PC-9 (cell line): ENCODE measurements at regions of chr12 and their contacts with region 1.

Region 1: GRCh38 chr12:7995266-7995963 is 37.1 kb upstream of the FOXJ2 start:
- DNase-seq: peak; percentile 83 to 87
- H3K4me3 ChIP-seq: peak overlapping the region; percentile 18; the same call in 1 of the 2 replicates
- H3K27ac ChIP-seq: peak overlapping the region; percentile 72
- H3K4me1 ChIP-seq: peaks cover 34% of the 10 kb centered on the region
- H3K27me3 ChIP-seq: no peaks in the 10 kb centered on the region
- CTCF ChIP-seq: peak; percentile 94

Region 2: DNA sequence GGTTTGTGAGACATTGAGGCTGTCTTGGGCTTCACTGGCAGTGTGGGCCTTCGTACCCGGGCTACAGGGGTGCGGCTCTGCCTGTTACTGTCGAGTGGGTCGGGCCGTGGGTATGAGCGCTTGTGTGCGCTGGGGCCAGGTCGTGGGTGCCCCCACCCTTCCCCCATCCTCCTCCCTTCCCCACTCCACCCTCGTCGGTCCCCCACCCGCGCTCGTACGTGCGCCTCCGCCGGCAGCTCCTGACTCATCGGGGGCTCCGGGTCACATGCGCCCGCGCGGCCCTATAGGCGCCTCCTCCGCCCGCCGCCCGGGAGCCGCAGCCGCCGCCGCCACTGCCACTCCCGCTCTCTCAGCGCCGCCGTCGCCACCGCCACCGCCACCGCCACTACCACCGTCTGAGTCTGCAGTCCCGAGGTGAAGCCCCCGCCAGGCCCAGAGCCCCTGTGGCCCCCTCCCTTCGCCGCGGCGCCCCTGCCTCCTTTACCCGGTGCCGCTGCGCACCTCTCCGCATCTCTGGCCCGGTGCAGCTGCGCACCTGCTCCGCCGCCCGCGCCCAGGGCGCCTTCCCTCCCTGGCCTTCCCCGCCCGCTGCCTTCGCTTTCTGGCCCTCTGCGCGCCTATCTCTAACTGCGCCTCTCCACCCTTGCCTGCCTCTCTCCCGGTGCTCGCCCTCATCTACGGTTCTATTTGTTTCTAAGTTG is 1081.0 kb before region 1 on chr12 and contains the start of gene ENO2:
- CTCF ChIA-PET with region 1: no interaction called
- POLR2A ChIA-PET with region 1: no interaction called
- intact Hi-C with region 1: no loop called
- DNase-seq: peak in 1 of 2 experiments; percentile 75
- H3K4me3 ChIP-seq: peak within 1 kb of the TSS; percentile 77
- H3K27ac ChIP-seq: no peak within 1 kb of the TSS
- H3K4me1 ChIP-seq: peaks cover 5% of the 10 kb centered on the region; the same call in 1 of the 2 replicates
- H3K27me3 ChIP-seq: peaks cover 11% of the 10 kb centered on the region
- CTCF ChIP-seq: no peak
- total RNA-seq, gene ENO2: 38.8 and 56.6 TPM in 2 replicates

Region 3: GRCh38 chr12:7678738-7679137 is 316.7 kb before region 1 on chr12:
- CTCF ChIA-PET with region 1: interaction called, 3 read pairs
- POLR2A ChIA-PET with region 1: no interaction called
- intact Hi-C with region 1: loop called (anchors 5 kb)
- DNase-seq: no peak
- H3K4me3 ChIP-seq: no peak overlapping the region
- H3K27ac ChIP-seq: no peak overlapping the region
- H3K4me1 ChIP-seq: no peaks in the 10 kb centered on the region
- H3K27me3 ChIP-seq: no peaks in the 10 kb centered on the region
- CTCF ChIP-seq: no peak

Region 4: GRCh38 chr12:7832059-7832696 is 163.2 kb before region 1 on chr12:
- CTCF ChIA-PET with region 1: no interaction called
- POLR2A ChIA-PET with region 1: no interaction called
- intact Hi-C with region 1: loop called (anchors 1 kb)
- DNase-seq: peak; percentile 48 to 56
- H3K4me3 ChIP-seq: no peak overlapping the region
- H3K27ac ChIP-seq: no peak overlapping the region
- H3K4me1 ChIP-seq: peaks cover 17% of the 10 kb centered on the region
- H3K27me3 ChIP-seq: no peaks in the 10 kb centered on the region
- CTCF ChIP-seq: peak; percentile 78

Region 5: DNA sequence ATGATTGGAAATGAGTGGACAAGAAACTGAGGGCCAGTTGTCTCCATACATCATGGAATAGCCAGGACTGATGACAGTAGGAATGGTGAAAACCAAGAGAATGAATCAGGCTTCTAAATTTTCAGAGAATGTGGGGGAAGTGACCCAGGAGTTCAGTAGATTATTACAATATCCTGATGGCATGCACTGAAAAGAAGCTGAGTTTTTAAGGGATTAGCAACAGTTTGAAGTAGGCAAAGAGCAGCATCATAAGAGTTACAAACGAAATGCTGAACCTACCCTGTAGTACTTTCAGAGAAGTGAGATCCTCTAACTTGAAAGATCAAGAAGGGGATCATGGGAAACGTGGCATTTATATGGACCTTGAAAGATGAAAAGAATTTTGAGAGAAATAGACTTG is 135.9 kb before region 1 on chr12:
- CTCF ChIA-PET with region 1: interaction called, 4 read pairs
- POLR2A ChIA-PET with region 1: no interaction called
- intact Hi-C with region 1: loop called (anchors 1 kb)
- DNase-seq: no peak
- H3K4me3 ChIP-seq: no peak overlapping the region
- H3K27ac ChIP-seq: no peak overlapping the region
- H3K4me1 ChIP-seq: peaks cover 14% of the 10 kb centered on the region
- H3K27me3 ChIP-seq: no peaks in the 10 kb centered on the region
- CTCF ChIP-seq: no peak

Region 6: GRCh38 chr12:7933255-7933729 is 62.1 kb before region 1 on chr12:
- CTCF ChIA-PET with region 1: interaction called, 19 read pairs
- POLR2A ChIA-PET with region 1: interaction called, 7 read pairs
- intact Hi-C with region 1: loop called (anchors 1 kb)
- DNase-seq: peak; percentile 79 to 90
- H3K4me3 ChIP-seq: peak overlapping the region; percentile 59
- H3K27ac ChIP-seq: peak overlapping the region; percentile 33; the same call in 1 of the 2 replicates
- H3K4me1 ChIP-seq: peaks cover 44% of the 10 kb centered on the region
- H3K27me3 ChIP-seq: no peaks in the 10 kb centered on the region
- CTCF ChIP-seq: peak; percentile 85

Region 7: GRCh38 chr12:7959701-7960121 is 35.7 kb before region 1 on chr12:
- CTCF ChIA-PET with region 1: interaction called, 3 read pairs
- POLR2A ChIA-PET with region 1: interaction called, 7 read pairs
- intact Hi-C with region 1: loop called (anchors 1 kb)
- DNase-seq: peak; percentile 81 to 96
- H3K4me3 ChIP-seq: peak overlapping the region; percentile 63; the same call in 1 of the 2 replicates
- H3K27ac ChIP-seq: peak overlapping the region; percentile 75
- H3K4me1 ChIP-seq: peaks cover 35% of the 10 kb centered on the region
- H3K27me3 ChIP-seq: no peaks in the 10 kb centered on the region
- CTCF ChIP-seq: no peak

Region 8: DNA sequence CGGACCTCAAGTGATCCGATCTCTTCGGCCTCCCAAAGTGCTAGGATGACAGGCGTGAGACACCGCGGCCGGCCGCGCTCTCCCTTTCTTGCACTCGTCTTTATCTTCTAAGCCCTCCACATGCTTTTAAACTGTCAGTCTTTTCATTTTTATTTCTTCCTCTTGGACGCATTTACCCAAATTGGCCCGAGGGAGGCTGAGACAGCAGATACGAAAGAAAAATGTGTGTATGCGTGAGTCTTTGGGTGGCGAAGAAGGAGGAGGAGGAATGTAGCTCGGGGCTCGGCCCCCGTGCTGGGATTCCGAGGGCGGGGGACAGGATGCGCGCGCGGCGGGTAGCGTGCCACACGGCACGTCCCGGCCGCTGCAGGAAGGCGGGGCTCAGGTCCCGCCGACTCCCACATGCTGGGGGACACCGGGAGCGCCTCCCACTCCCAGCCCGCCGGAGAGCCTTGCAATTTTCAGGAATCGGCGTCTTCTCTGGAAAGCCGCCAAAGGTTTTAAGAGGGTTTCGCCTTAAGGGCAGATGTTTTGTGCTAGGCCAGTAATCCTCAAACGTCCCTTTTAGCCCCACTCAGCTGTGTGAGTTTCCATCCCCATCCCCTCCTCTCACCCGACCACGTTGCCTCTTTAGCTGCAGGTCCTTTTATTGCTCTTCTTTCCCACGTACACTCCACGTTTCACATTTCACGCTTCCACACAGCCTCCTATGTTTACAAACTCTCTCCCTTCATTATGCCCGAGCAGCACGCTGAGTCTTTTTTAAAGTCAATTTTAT is 24.8 kb before region 1 on chr12:
- CTCF ChIA-PET with region 1: interaction called, 4 read pairs
- POLR2A ChIA-PET with region 1: interaction called, 8 read pairs
- intact Hi-C with region 1: loop called (anchors 2 kb)
- DNase-seq: peak; percentile 90 to 98
- H3K4me3 ChIP-seq: peak overlapping the region; percentile 58
- H3K27ac ChIP-seq: peak overlapping the region; percentile 65
- H3K4me1 ChIP-seq: peaks cover 18% of the 10 kb centered on the region
- H3K27me3 ChIP-seq: no peaks in the 10 kb centered on the region
- CTCF ChIP-seq: no peak

Region 9: GRCh38 chr12:7981446-7981845 is 14.0 kb before region 1 on chr12:
- CTCF ChIA-PET with region 1: no interaction called
- POLR2A ChIA-PET with region 1: no interaction called
- intact Hi-C with region 1: no loop called
- DNase-seq: peak in 1 of 2 experiments; percentile 45
- H3K4me3 ChIP-seq: no peak overlapping the region
- H3K27ac ChIP-seq: peak overlapping the region; percentile 61; the same call in 1 of the 2 replicates
- H3K4me1 ChIP-seq: peaks cover 30% of the 10 kb centered on the region
- H3K27me3 ChIP-seq: no peaks in the 10 kb centered on the region
- CTCF ChIP-seq: no peak